Cardiac septum (tissue), 1 donor: ENCODE measurements at regions of chr9 and their contacts with region 1.

Region 1: DNA sequence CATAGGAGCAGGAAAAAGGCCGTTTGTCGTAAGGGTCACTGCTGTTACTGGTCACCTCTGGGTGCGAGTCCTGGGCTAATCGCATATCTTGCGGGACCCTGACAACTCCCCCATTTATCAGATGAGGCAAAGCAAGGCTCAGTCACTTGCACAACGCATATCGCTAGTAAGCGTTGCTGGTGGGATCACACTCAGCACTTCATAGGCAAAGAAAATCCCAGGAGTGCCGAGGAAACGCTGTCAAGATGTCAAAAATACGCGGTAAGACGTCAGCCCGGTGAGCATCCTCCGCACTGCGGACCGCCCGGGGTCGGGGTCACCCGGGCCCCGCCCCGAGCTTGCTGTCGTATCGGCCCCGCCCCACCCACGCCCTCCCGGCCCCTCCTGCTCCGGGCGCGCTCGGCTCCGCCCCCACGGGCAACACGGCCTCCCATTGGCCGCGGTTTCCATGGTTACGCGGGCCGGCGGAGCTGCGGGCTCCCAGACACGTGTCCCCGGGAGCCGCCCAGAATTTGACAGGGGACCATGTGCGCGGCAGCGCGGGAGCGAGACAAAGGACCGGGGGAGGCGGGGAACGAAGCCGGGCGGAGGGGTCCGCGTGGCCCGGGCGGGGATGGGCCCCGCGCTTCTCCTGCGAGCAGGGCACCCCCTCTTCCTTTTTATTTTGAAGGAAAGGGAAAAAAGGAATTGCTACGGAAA is 80.2 kb upstream of the IER5L start:
- DNase-seq: peak; percentile 94

Region 2: DNA sequence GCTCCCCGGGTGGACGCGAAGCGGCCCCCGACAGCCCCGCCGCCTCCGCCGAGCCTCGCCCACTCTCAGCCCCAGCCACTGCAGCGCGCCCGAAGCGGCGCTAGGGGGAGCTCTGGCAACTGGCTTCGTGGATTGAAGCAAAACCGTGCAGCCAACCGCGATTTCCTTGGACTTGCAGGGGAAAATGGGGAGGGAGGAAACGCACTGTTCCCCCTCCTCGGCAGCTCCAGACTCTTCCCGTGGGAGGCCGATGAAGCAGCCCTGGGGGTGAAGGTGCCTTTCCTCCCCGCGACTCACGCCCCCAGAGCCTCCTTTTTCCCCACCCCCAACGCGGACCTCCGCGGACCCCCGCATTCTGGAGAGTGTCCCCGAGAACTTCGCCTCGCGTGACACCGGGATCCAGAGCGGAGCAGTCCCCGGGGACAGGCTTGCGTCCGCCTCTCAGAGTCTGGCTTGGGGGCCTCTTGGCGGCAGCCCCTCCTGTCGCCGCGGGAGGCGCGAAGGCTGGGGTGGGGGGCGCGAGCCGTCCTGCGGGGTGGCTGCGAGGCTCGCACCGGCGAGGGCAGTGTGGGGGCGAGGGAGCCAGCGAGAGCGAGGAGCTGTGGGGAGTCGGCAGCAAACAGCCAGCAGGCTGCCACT is 84.1 kb before region 1 on chr9:
- intact Hi-C with region 1: loop called (anchors 1 kb)
- DNase-seq: peak; percentile 95

Region 3: DNA sequence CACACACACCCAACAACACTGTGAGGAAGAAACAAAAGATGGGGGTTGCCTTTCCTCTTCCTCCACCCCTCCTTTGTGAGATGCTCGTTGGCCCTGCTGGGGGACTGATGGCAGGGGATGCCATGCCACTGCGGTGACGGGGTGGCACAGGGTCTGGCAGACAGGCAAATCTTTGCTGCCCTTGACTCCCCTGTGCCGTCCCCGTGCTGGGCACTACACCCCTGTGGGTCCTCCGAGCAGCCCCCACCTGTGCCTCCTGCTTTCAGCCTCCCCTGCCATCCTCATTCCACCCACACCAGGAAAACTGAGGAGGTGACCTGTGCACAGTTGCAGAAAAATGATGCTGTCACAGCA is 40.0 kb before region 1 on chr9:
- intact Hi-C with region 1: loop called (anchors 5 kb)
- DNase-seq: no peak

Region 4: DNA sequence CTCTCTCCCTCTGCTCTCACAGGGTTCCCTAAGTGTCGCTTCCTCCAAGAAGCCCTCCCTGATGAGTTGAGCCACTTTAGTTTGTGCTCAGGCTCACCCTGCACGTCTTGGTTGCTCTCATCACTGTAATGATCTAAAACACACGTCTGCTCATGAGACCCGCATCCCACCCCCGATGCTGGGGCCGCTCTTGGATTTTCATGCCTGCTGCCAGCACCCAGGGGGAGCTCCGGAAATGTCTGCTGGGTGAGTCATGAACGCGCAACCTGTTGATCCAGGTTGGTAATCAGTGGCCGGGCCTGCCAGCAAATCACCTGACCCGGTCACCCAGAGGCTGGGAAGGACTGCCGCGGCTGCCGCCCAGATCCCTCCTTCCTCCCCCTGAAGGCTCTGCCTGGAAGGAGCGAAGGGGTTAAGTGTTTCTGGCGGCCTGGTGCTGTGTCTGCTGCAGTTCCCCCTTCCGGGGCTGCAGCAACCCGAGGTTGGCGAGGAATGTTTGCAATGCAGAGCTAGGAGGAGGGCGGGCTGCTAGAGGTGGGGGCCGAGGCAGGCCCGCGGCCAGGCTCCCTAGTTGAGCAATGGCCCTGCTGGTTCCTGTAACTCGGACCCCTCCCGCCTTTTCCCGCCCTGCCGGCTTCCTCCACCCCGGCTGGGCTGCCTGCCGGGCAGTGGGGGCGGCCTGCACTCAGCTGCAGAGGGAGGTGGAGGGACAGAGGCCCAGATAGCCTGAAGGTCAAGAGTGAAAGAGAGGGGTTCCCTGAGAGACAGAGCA is 75.9 kb after region 1 on chr9:
- intact Hi-C with region 1: loop called (anchors 5 kb)
- DNase-seq: peak; percentile 96